ENCODE measurements at regions of chr15 and their contacts with region 1.

Region 1: DNA sequence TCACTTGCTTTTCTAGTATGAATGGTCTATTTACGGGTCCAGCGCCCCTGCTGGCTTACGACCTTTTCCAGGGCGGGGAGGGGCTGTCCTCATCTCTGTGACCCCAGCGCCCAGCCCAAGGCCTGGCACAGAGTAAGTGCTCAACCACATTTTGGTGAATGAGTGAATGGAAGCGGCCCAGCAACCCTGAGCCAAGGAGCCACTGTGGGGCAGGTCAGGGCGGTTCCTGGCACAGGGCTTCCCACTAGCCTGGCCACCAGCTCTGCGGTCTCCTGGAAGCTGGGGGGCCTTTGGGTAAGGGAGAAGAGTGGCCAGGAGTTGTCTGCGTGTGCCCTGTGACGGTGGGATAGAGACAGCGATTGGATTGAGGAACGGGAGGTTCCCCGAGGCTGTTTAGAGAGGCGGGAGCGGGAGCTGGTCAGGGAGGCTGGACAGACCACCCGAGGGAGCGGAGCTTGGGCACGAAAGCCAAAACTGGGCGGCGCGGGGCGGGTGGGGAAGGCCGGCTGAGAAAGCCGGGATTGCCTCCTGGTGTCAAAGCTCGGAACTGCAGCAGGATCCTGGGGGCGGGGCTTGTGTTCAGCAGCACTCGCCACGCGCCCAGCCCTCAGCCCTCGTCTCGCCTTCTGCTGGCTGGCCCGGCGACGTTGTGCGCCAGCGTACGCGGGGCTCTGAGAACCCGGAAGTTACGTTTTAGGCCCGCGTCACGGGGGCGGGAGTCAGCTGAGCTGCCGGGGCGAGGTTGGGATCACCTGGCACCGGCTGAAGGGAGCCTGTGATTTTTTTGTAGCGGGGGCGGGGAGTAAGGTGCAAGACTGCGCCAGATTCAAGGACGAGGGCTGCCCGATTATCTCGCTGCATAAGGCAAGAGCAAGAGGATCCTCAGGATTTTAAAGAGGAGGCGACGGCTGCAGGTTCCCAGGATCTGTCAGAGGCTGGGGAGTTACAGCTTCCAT is at the start of gene VPS18:
- DNase-seq: peak; percentile 96 to 99 (median 98)
- ATAC-seq: peak; percentile 98 to 99 (median 98)
- H3K4me3 ChIP-seq: peak within 1 kb of the TSS; percentile 87 to 91
- H3K4me3 Mint-ChIP-seq: peak within 1 kb of the TSS; percentile 99
- H3K27ac ChIP-seq: peak within 1 kb of the TSS; percentile 76
- H3K27ac Mint-ChIP-seq: peak within 1 kb of the TSS; percentile 91 to 95
- H3K4me1 ChIP-seq: peaks cover 11 to 33% of the 10 kb centered on the region in 2 experiments
- H3K4me1 Mint-ChIP-seq: peaks cover 32 to 43% (median 33%) of the 10 kb centered on the region in 3 donors
- H3K27me3 ChIP-seq: no peaks in the 10 kb centered on the region
- H3K27me3 Mint-ChIP-seq: no peaks in the 10 kb centered on the region
- total RNA-seq, gene VPS18: 16.2 to 23.4 (median 21.3) TPM

Region 2: DNA sequence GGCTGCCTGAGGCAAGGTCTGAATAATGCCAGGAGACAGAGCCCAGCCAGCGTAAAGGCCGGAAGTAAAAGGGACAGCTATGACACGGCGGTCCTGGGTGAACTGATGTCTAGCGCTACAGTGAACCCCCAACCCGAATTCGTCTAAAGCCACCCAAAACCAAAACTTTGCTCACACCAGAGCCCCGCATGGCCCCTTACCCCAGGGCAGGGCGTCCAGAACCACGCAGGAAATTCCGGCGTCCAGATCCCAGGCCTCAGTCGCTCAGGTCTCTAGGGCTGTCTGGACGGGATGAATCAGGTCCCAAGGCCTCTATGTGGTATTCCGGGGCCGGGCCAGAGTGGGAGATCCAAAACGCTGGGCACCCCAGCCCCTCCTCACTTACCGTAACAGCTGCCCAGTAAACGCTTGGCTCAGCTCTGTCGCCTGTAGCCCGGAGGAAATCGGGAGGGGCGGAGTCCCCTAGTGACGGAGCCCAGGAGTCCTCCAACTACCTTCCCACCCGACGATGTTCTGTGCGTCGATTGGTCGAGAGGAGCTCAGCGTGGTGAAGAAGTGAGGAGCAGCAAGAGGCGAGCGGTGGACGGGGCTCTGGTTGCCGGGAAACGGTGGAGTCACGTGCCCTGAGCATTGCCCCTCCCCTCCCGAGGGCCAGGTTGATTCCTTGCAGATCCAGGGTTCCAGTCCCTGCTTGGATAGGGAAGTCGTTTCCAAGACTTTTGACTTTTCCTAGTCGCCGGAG is 329.2 kb before region 1 on chr15 and contains the start of gene CCDC32:
- CTCF ChIA-PET with region 1: interaction called, 5 to 14 read pairs
- POLR2A ChIA-PET with region 1: interaction called in 1 of 2 experiments, 14 read pairs
- DNase-seq: peak; percentile 82 to 99 (median 94)
- ATAC-seq: peak; percentile 93 to 96 (median 94)
- H3K4me3 ChIP-seq: peak within 1 kb of the TSS; percentile 79 to 95
- H3K4me3 Mint-ChIP-seq: peak within 1 kb of the TSS; percentile 88 to 95 (median 94)
- H3K27ac ChIP-seq: peak within 1 kb of the TSS; percentile 84
- H3K27ac Mint-ChIP-seq: peak within 1 kb of the TSS; percentile 84 to 94
- H3K4me1 ChIP-seq: peaks cover 15 to 28% of the 10 kb centered on the region in 2 experiments
- H3K4me1 Mint-ChIP-seq: peaks cover 55 to 66% (median 57%) of the 10 kb centered on the region in 3 donors
- H3K27me3 ChIP-seq: peaks cover 0 to 7% of the 10 kb centered on the region in 2 experiments
- H3K27me3 Mint-ChIP-seq: no peaks in the 10 kb centered on the region
- total RNA-seq, gene CCDC32: 19.9 to 31.5 (median 27.2) TPM

Region 3: GRCh38 chr15:40906091-40906990 is 12.3 kb after region 1 on chr15:
- CTCF ChIA-PET with region 1: interaction called, 6 to 38 read pairs
- POLR2A ChIA-PET with region 1: no interaction called
- DNase-seq: peak in 34 of 35 experiments; percentile 42 to 82 (median 62)
- ATAC-seq: peak; percentile 63 to 76 (median 70)
- H3K4me3 ChIP-seq: peak overlapping the region; percentile 76 to 77
- H3K4me3 Mint-ChIP-seq: peak overlapping the region; percentile 64 to 89 (median 82)
- H3K27ac ChIP-seq: peak overlapping the region; percentile 56
- H3K27ac Mint-ChIP-seq: peak overlapping the region; percentile 63 to 94
- H3K4me1 ChIP-seq: peaks cover 10 to 44% of the 10 kb centered on the region in 2 experiments
- H3K4me1 Mint-ChIP-seq: peaks cover 23 to 39% (median 38%) of the 10 kb centered on the region in 3 donors
- H3K27me3 ChIP-seq: no peaks in the 10 kb centered on the region
- H3K27me3 Mint-ChIP-seq: no peaks in the 10 kb centered on the region

Region 4: DNA sequence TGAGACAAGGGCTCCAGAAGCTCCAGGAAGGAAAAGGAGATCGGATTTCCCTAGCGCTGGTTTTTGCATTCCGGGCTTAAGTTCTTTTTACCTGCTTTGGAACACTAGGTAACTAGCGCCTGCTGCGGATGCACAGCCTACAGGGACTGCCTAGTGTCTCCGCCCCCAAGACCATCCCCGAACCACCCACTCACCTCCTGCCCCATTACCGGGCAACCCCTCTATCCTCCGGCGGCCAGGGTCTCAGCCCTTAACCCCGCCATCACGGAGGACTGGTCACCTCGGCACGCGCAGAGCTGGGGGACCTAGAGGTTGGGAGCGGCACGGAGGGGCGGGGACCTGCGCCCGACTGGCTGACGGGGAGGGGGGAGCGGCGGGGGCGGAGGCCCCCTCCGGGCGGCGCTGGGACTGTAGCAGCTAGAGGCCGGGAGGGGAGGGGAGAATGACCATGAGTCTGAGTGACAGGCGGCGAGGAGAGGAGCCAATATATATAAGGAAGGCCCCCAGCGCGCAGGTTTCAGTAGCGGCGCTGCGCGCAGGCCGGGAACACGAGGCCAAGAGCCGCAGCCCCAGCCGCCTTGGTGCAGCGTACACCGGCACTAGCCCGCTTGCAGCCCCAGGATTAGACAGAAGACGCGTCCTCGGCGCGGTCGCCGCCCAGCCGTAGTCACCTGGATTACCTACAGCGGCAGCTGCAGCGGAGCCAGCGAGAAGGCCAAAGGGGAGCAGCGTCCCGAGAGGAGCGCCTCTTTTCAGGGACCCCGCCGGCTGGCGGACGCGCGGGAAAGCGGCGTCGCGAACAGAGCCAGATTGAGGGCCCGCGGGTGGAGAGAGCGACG is 35.0 kb after region 1 on chr15 and contains the start of gene DLL4:
- CTCF ChIA-PET with region 1: no interaction called
- POLR2A ChIA-PET with region 1: no interaction called
- DNase-seq: peak in 10 of 35 experiments; percentile 26 to 55 (median 40)
- ATAC-seq: peak; percentile 52 to 62 (median 56)
- H3K4me3 ChIP-seq: peak within 1 kb of the TSS; percentile 43 to 78
- H3K4me3 Mint-ChIP-seq: peak within 1 kb of the TSS; percentile 71 to 89 (median 76)
- H3K27ac ChIP-seq: no peak within 1 kb of the TSS
- H3K27ac Mint-ChIP-seq: no peak within 1 kb of the TSS
- H3K4me1 ChIP-seq: peaks cover 23 to 69% of the 10 kb centered on the region in 2 experiments
- H3K4me1 Mint-ChIP-seq: peaks cover 41 to 51% (median 44%) of the 10 kb centered on the region in 3 donors
- H3K27me3 ChIP-seq: peaks cover 4 to 85% of the 10 kb centered on the region in 2 experiments
- H3K27me3 Mint-ChIP-seq: peaks cover 43 to 72% of the 10 kb centered on the region in 2 donors
- total RNA-seq, gene DLL4: 0.12 to 0.25 (median 0.13) TPM in 3 of 5 donors, not detected in the others

Measured in T-cell (primary cell).